Activated naive CD8-positive, alpha-beta T cell treated with anti-CD3 and anti-CD28 coated beads, Interleukin-2, amount 10 ng/mL, durations not matched to agents 7 days and 5 days (primary cell): ENCODE measurements at regions of chr4 and their contacts with region 1.

Region 1: GRCh38 chr4:25862411-25863346 is at the start of gene SEL1L3:
- DNase-seq: peak; percentile 69
- ATAC-seq: peak; percentile 40
- H3K4me3 Mint-ChIP-seq: peak within 1 kb of the TSS; percentile 100
- H3K27ac Mint-ChIP-seq: peak within 1 kb of the TSS; percentile 100
- H3K4me1 Mint-ChIP-seq: peaks cover 38% of the 10 kb centered on the region
- H3K27me3 Mint-ChIP-seq: no peaks in the 10 kb centered on the region
- total RNA-seq, gene SEL1L3: 62.8 to 69.7 TPM

Region 2: DNA sequence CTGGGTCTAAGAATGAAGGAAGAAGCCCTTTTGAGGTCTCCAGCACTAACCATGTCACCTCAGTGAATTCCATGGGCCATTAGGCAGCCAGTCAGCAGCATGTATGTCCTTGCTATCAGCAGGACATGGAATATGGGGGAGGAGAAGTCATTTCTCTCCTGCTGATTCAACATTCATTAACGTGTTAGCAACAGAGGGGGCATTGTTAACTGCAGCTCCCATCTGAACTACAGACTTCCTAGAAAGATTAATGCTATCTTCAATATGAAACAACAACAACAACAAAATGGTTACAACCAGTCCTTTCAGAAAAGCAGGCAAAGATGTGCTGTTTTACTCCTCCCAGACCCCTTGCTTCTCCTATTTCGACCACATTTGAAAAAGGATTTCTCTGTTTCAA is 327.4 kb before region 1 on chr4:
- POLR2A ChIA-PET with region 1: no interaction called
- DNase-seq: no peak
- ATAC-seq: no peak
- H3K4me3 Mint-ChIP-seq: no peak overlapping the region
- H3K27ac Mint-ChIP-seq: no peak overlapping the region
- H3K4me1 Mint-ChIP-seq: no peaks in the 10 kb centered on the region
- H3K27me3 Mint-ChIP-seq: peaks cover 2% of the 10 kb centered on the region

Region 3: GRCh38 chr4:25842229-25842845 is 20.3 kb before region 1 on chr4:
- POLR2A ChIA-PET with region 1: interaction called, 15 read pairs
- DNase-seq: peak; percentile 59
- ATAC-seq: peak; percentile 78
- H3K4me3 Mint-ChIP-seq: peak overlapping the region; percentile 49
- H3K27ac Mint-ChIP-seq: peak overlapping the region; percentile 77
- H3K4me1 Mint-ChIP-seq: peaks cover 31% of the 10 kb centered on the region
- H3K27me3 Mint-ChIP-seq: no peaks in the 10 kb centered on the region

Region 4: DNA sequence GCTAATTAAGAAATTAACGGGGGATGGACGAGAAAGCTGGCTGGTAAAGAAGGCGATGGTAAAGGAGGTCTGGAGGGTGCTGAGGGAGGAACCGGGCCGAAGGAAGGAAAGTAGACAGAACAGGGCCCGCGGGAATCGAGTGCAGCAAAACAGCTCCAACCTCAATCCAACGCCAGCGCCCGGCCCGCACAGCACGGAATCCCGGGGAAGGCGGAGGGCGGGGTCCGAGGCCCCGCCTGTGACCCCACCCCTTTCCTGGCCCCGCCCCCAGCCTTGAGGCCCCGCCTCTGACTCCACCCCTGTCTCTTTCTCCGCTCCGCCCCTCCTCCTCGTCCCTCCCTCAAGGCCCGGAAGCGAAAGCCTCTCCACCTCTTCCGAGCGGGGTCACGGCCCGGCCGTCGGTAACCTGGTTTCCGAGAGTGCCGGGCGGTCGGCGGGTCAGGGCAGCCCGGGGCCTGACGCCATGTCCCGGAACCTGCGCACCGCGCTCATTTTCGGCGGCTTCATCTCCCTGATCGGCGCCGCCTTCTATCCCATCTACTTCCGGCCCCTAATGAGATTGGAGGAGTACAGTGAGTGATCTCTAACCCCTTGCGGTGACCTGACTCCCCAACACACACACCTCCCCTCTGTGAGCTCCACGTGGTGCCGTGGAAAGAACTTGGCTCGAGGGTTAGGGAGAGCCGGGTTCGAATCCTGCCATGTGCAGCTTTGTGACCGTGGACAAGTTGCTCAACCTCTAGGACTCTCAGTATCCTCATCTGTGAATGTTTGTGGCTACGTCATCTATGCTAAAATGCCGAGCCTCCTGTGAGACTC is 51.4 kb after region 1 on chr4 and contains the start of gene SMIM20:
- POLR2A ChIA-PET with region 1: interaction called, 12 read pairs
- DNase-seq: peak; percentile 89
- ATAC-seq: peak; percentile 95
- H3K4me3 Mint-ChIP-seq: peak within 1 kb of the TSS; percentile 97
- H3K27ac Mint-ChIP-seq: peak within 1 kb of the TSS; percentile 98
- H3K4me1 Mint-ChIP-seq: peaks cover 15% of the 10 kb centered on the region
- H3K27me3 Mint-ChIP-seq: peaks cover 4% of the 10 kb centered on the region
- total RNA-seq, gene SMIM20: 12.9 to 14.9 TPM